K562 (cell line): ENCODE measurements at regions of chr5 and their contacts with region 1.

Region 1: GRCh38 chr5:64612344-64612961 is 77.8 kb upstream of the SHISAL2B start:
- DNase-seq: peak; percentile 12 to 56 (median 28)
- ATAC-seq: peak; percentile 82
- H3K4me3 ChIP-seq: no peak overlapping the region
- H3K27ac ChIP-seq: no peak overlapping the region
- H3K4me1 ChIP-seq: no peaks in the 10 kb centered on the region
- H3K27me3 ChIP-seq: no peaks in the 10 kb centered on the region
- CTCF ChIP-seq: peak; percentile 52 to 78 (median 62)
- EP300 ChIP-seq: no peak
- POLR2A ChIP-seq: no peak
- RAD21 ChIP-seq: peak; percentile 70 to 77

Region 2: GRCh38 chr5:63401436-63402046 is 1210.9 kb before region 1 on chr5:
- CTCF ChIA-PET with region 1: no interaction called
- POLR2A ChIA-PET with region 1: no interaction called
- in situ Hi-C with region 1: no loop called
- intact Hi-C with region 1: loop called (anchors 5 kb)
- DNase-seq: peak; percentile 13 to 57 (median 30)
- ATAC-seq: peak; percentile 72
- H3K4me3 ChIP-seq: no peak overlapping the region
- H3K27ac ChIP-seq: no peak overlapping the region
- H3K4me1 ChIP-seq: no peaks in the 10 kb centered on the region
- H3K27me3 ChIP-seq: no peaks in the 10 kb centered on the region
- CTCF ChIP-seq: peak; percentile 47 to 51 (median 50)
- EP300 ChIP-seq: no peak
- POLR2A ChIP-seq: no peak
- RAD21 ChIP-seq: peak; percentile 57 to 73

Region 3: GRCh38 chr5:64074533-64074932 is 537.9 kb before region 1 on chr5:
- CTCF ChIA-PET with region 1: no interaction called
- POLR2A ChIA-PET with region 1: no interaction called
- in situ Hi-C with region 1: no loop called
- intact Hi-C with region 1: loop called (anchors 10 kb)
- DNase-seq: peak; percentile 12 to 37 (median 21)
- ATAC-seq: no peak
- H3K4me3 ChIP-seq: no peak overlapping the region
- H3K27ac ChIP-seq: no peak overlapping the region
- H3K4me1 ChIP-seq: no peaks in the 10 kb centered on the region
- H3K27me3 ChIP-seq: no peaks in the 10 kb centered on the region
- CTCF ChIP-seq: peak in 2 of 3 experiments; percentile 37 to 39; a peak in 3 of 6 replicates
- EP300 ChIP-seq: no peak
- POLR2A ChIP-seq: no peak
- RAD21 ChIP-seq: peak; percentile 26 to 55; a peak in 2 of 4 replicates

Region 4: DNA sequence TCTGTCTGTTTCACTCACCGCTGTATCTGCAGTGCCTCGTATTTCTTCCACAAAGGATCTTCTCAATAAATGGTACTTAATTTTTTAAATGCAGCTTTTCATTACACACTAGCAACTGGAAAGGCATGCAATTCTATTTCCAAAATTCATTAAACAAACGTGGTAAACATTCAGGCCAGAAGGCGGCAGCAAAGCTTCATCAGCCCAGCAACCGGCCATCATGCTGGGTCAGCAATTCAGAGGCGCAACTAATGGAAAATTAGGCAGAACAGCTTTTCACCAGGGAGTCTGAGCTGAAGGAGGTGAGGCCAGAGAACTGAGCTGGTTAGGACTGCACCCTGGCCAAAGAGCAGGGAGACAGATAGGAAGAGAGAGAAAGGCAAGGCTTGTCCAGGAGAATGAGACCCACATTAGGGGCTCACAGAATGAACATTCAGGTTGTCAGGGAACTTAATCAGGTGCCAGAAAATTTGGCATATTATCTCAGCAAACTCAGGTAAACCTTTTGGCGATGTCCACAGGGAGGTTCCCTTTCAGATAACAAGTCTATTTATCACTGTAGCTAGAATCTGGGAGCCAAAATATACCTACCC is 464.5 kb before region 1 on chr5:
- CTCF ChIA-PET with region 1: no interaction called
- POLR2A ChIA-PET with region 1: no interaction called
- in situ Hi-C with region 1: no loop called
- intact Hi-C with region 1: loop called (anchors 2 kb)
- DNase-seq: peak; percentile 14 to 21 (median 18)
- ATAC-seq: no peak
- H3K4me3 ChIP-seq: no peak overlapping the region
- H3K27ac ChIP-seq: no peak overlapping the region
- H3K4me1 ChIP-seq: no peaks in the 10 kb centered on the region
- H3K27me3 ChIP-seq: no peaks in the 10 kb centered on the region
- CTCF ChIP-seq: peak; percentile 34 to 55 (median 48); a peak in 4 of 6 replicates
- EP300 ChIP-seq: no peak
- POLR2A ChIP-seq: no peak
- RAD21 ChIP-seq: peak; percentile 12 to 53; a peak in 2 of 4 replicates

Region 5: GRCh38 chr5:64229163-64229774 is 383.2 kb before region 1 on chr5:
- CTCF ChIA-PET with region 1: interaction called, 3 read pairs
- POLR2A ChIA-PET with region 1: no interaction called
- in situ Hi-C with region 1: no loop called
- intact Hi-C with region 1: loop called (anchors 1 kb)
- DNase-seq: peak; percentile 8 to 36 (median 24)
- ATAC-seq: 0 out of 3 replicates have a peak, but pooled peaks have one; percentile 33
- H3K4me3 ChIP-seq: no peak overlapping the region
- H3K27ac ChIP-seq: no peak overlapping the region
- H3K4me1 ChIP-seq: no peaks in the 10 kb centered on the region
- H3K27me3 ChIP-seq: no peaks in the 10 kb centered on the region
- CTCF ChIP-seq: peak; percentile 18 to 54 (median 33); a peak in 3 of 6 replicates
- EP300 ChIP-seq: no peak
- POLR2A ChIP-seq: no peak
- RAD21 ChIP-seq: peak; percentile 23 to 61; a peak in 3 of 4 replicates

Region 6: GRCh38 chr5:64566310-64566916 is 46.0 kb before region 1 on chr5:
- CTCF ChIA-PET with region 1: no interaction called
- POLR2A ChIA-PET with region 1: no interaction called
- in situ Hi-C with region 1: no loop called
- intact Hi-C with region 1: no loop called
- DNase-seq: no peak
- ATAC-seq: no peak
- H3K4me3 ChIP-seq: no peak overlapping the region
- H3K27ac ChIP-seq: no peak overlapping the region
- H3K4me1 ChIP-seq: no peaks in the 10 kb centered on the region
- H3K27me3 ChIP-seq: no peaks in the 10 kb centered on the region
- CTCF ChIP-seq: no peak
- EP300 ChIP-seq: no peak
- POLR2A ChIP-seq: no peak
- RAD21 ChIP-seq: no peak

Region 7: DNA sequence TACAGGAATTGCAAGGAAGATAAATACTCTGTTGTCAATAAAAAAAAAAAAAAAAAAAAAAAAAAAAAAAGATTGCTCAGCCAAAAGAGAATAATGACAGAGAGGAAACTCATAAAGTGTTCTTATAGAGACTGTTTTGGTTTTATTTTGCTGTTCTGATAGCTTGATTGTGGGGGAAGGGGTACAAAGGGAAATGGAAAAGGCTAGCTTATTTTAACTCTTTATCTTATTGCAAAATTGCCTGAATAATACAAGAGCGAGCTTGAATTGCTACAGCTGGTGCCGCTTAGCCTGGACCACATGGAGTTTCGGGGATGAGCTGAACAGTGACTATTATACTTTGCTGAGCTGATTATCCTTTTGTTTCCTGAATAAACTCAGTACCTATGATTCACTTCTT is 46.8 kb after region 1 on chr5:
- CTCF ChIA-PET with region 1: no interaction called
- POLR2A ChIA-PET with region 1: no interaction called
- in situ Hi-C with region 1: no loop called
- intact Hi-C with region 1: no loop called
- DNase-seq: no peak
- ATAC-seq: no peak
- H3K4me3 ChIP-seq: no peak overlapping the region
- H3K27ac ChIP-seq: no peak overlapping the region
- H3K4me1 ChIP-seq: no peaks in the 10 kb centered on the region
- H3K27me3 ChIP-seq: no peaks in the 10 kb centered on the region
- CTCF ChIP-seq: no peak
- EP300 ChIP-seq: no peak
- POLR2A ChIP-seq: no peak
- RAD21 ChIP-seq: no peak